Mammary epithelial cell (primary cell): ENCODE measurements at regions of chr10 and their contacts with region 1.

Region 1: DNA sequence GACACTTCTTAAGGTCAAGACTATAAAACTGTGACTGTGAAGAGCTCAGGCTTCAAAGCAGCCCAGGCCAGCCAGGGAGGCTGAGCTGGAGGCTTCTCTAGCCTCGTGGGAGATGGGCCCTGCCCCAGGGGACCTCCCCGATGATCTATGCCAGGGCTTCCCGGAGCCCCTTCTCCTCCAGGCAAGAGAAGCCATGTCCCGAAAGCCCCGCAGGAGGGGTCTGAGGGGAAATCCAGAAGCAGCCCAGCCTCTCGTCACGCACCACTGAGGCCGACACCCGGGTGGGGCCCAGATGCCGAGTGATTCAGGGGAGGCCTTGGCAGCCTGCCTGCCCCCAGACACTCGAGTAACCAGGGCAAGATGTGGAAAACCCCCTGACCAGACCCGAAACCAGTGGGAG is 63.7 kb downstream of the PROSER2 start:
- DNase-seq: peak; percentile 76
- H3K4me3 ChIP-seq: no peak overlapping the region
- H3K27ac ChIP-seq: peak overlapping the region; percentile 56
- H3K4me1 ChIP-seq: peaks cover 44% of the 10 kb centered on the region
- H3K27me3 ChIP-seq: no peaks in the 10 kb centered on the region
- CTCF ChIP-seq: no peak

Region 2: GRCh38 chr10:11823122-11823988 is 63.5 kb before region 1 on chr10 and contains the start of gene PROSER2:
- CTCF ChIA-PET with region 1: interaction called, 18 read pairs
- dilution Hi-C with region 1: no loop called
- in situ Hi-C with region 1: no loop called
- intact Hi-C with region 1: no loop called
- DNase-seq: peak; percentile 66
- H3K4me3 ChIP-seq: peak within 1 kb of the TSS; percentile 89 to 97 (median 92)
- H3K27ac ChIP-seq: peak within 1 kb of the TSS; percentile 59
- H3K4me1 ChIP-seq: peaks cover 23% of the 10 kb centered on the region
- H3K27me3 ChIP-seq: no peaks in the 10 kb centered on the region
- CTCF ChIP-seq: no peak
- total RNA-seq, gene PROSER2: 56.3 to 65.7 TPM

Region 3: GRCh38 chr10:11898372-11899066 is 11.7 kb after region 1 on chr10:
- CTCF ChIA-PET with region 1: no interaction called
- dilution Hi-C with region 1: no loop called
- in situ Hi-C with region 1: no loop called
- intact Hi-C with region 1: loop called (anchors 1 kb)
- DNase-seq: peak; percentile 85
- H3K4me3 ChIP-seq: no peak overlapping the region
- H3K27ac ChIP-seq: peak overlapping the region; percentile 83
- H3K4me1 ChIP-seq: peaks cover 24% of the 10 kb centered on the region
- H3K27me3 ChIP-seq: no peaks in the 10 kb centered on the region
- CTCF ChIP-seq: no peak

Region 4: GRCh38 chr10:11909618-11910017 is 22.8 kb after region 1 on chr10:
- CTCF ChIA-PET with region 1: no interaction called
- dilution Hi-C with region 1: no loop called
- in situ Hi-C with region 1: no loop called
- intact Hi-C with region 1: loop called (anchors 2 kb)
- DNase-seq: no peak
- H3K4me3 ChIP-seq: no peak overlapping the region
- H3K27ac ChIP-seq: no peak overlapping the region
- H3K4me1 ChIP-seq: no peaks in the 10 kb centered on the region
- H3K27me3 ChIP-seq: no peaks in the 10 kb centered on the region
- CTCF ChIP-seq: no peak

Region 5: GRCh38 chr10:11949152-11949551 is 62.3 kb after region 1 on chr10:
- CTCF ChIA-PET with region 1: interaction called, 10 read pairs
- dilution Hi-C with region 1: no loop called
- in situ Hi-C with region 1: no loop called
- intact Hi-C with region 1: no loop called
- DNase-seq: no peak
- H3K4me3 ChIP-seq: no peak overlapping the region
- H3K27ac ChIP-seq: no peak overlapping the region
- H3K4me1 ChIP-seq: no peaks in the 10 kb centered on the region
- H3K27me3 ChIP-seq: no peaks in the 10 kb centered on the region
- CTCF ChIP-seq: no peak